Dorsolateral prefrontal cortex (tissue), 120 donors: ENCODE measurements at regions of chr22 and their contacts with region 1.

Region 1: DNA sequence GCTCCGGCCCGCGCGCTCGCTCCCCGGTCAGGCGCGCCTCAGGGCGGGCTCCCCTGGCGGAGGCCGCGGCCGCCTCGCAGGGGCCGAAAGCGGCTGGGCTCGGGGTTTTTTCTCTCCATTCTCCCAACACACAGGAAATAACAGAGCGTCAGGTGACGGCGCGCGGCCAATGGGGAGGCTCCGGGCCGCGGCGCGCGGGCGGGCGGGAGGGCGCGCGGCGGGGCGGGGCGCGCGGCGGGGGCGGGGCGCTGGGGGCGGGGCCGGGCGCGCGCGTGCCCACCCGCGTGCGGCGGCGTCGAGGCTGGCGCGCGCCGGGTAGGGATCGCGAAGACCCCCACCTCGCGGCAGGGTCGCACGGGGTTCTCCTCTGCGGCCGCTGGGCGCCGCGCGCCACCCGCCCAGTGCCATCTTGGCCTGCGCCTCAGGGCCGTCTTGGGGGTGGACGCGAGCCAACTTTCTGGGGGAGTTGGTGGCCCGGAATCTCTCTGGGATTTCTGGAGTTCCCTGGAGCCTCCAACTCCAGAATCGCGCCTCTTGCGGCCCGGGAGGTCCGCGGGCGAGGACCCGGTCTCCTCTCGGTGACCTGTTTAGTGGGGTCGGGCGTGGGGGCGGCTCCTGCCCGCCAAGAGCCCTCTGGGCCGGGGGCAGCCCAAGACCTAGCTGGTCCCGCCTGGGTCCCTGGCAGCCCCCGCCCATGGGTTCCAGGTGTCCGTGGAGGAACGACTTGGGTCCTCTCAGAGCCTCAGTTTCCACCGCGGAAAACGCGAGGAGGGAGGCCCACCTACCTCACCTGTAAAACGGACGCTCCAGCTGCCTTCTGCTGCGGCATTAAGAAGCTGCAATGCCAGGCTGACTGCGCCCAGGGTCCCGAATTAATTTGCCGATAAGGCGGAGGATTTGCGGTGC is at the start of gene TCF20:
- DNase-seq: peak in 9 of 10 donors; percentile 60 to 82 (median 72)
- H3K4me3 ChIP-seq: peak within 1 kb of the TSS; percentile 66 to 99 (median 95)
- H3K27ac ChIP-seq: peak within 1 kb of the TSS in 53 of 59 donors; percentile 29 to 92 (median 71)
- H3K27me3 ChIP-seq: no peaks in the 10 kb centered on the region
- CTCF ChIP-seq: no peak
- total RNA-seq, gene TCF20: 46.9 to 80.5 (median 64.3) TPM

Region 2: DNA sequence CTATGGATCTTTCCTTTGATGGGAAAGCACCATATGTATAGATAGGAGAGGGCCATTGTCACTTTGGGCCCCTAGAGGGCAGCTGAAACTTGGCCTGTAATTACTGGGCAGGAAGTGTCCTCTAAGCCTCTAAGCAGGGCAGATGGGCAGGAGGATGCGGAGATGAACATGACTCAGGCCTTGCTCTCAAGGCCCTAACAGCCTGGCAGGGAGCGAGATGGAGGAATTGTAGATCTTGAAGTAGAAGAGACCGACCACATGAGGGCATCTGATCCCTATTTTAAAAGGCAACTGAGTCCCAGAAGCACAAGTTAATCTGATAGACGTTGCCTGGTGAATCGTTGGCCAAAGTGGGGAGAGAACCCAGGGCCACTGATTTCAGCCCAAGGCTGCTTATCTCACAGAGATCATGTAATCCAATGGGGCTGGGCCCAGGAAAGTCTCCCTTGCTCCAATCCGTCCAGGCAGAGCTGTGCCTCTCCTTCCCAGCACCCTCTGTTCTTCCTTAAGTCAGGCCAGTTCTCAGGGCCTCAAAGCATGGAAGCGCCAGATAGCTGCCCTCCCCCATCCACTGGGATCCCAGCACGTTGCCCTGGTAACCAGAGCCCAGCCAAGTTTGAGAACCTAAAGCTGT is 304.0 kb before region 1 on chr22:
- intact Hi-C with region 1: no loop called
- DNase-seq: peak in 6 of 10 donors; percentile 46 to 60 (median 56)
- H3K4me3 ChIP-seq: no peak overlapping the region
- H3K27ac ChIP-seq: peak overlapping the region in 54 of 59 donors; percentile 2 to 85 (median 60)
- H3K27me3 ChIP-seq: no peaks in the 10 kb centered on the region
- CTCF ChIP-seq: peak in 54 of 56 donors; percentile 9 to 73 (median 50)

Region 3: DNA sequence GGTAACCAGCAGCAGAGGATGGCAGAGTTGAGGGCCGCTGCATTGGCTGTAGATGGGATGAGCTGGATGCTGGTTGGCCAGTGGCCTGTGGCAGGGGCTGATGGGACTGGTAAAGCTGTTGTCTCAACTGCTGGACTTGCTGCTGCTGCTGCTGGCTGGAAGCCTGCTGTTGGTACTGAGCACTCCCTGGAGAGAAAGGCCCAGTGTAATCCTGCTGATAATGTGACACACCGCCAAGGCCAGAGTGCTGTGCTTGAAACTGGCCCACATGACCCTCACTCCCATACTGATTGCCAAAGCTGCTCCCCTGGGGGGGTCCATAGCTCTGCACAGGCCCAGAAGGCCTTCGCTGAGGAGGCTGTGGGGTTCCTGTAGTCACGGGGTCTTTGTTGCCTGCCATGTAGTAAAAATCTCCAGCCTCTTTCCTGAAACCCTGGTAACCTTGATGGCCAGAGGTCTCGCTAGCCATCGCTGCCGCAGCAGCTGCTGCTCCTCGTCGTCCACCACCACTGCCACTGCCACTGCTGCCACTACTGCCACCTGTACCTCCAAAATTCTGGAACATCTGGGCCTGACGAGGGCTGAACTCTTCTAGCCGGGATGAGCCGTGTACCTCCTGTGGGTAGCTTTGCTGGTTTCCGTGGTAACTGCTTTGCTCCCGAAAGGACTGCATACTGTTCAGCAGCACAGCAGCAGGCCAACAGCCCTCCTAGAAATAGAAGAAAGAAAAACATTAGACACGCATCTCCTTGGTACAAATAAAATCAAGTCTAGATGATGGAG is 55.9 kb before region 1 on chr22:
- intact Hi-C with region 1: loop called (anchors 2 to 10 kb)
- DNase-seq: peak; percentile 26 to 92 (median 89)
- H3K4me3 ChIP-seq: peak overlapping the region in 11 of 59 donors; percentile 0 to 37 (median 14)
- H3K27ac ChIP-seq: peak overlapping the region; percentile 52 to 96 (median 92)
- H3K27me3 ChIP-seq: no peaks in the 10 kb centered on the region
- CTCF ChIP-seq: peak in 5 of 56 donors; percentile 12 to 38 (median 15)

Region 4: DNA sequence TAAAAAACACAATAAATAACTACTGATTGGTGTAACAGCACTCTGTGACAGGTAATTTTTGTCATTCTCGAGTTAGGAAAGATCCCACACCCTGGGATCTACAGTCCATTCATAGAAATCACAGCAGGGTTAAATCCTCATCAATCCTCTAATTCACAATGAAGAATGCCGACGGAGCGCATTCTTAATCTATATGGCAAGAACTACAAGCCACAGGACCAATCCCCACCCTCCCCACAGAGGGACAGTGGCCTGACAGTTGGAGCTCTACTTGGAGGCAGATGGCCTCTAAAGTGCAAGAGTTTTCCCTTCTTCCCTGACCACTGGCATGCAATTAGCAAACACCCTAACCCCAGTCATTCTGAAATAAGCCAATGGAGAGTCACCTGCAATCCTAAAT is 34.5 kb before region 1 on chr22:
- intact Hi-C with region 1: no loop called
- DNase-seq: no peak
- H3K4me3 ChIP-seq: no peak overlapping the region
- H3K27ac ChIP-seq: no peak overlapping the region
- H3K27me3 ChIP-seq: no peaks in the 10 kb centered on the region
- CTCF ChIP-seq: no peak

Region 5: GRCh38 chr22:42313804-42314581 is 43.2 kb after region 1 on chr22:
- intact Hi-C with region 1: no loop called
- DNase-seq: peak in 7 of 10 donors; percentile 33 to 74 (median 63)
- H3K4me3 ChIP-seq: no peak overlapping the region
- H3K27ac ChIP-seq: peak overlapping the region in 5 of 59 donors; percentile 2 to 50 (median 26)
- H3K27me3 ChIP-seq: no peaks in the 10 kb centered on the region
- CTCF ChIP-seq: peak in 47 of 56 donors; percentile 14 to 64 (median 42)

Region 6: DNA sequence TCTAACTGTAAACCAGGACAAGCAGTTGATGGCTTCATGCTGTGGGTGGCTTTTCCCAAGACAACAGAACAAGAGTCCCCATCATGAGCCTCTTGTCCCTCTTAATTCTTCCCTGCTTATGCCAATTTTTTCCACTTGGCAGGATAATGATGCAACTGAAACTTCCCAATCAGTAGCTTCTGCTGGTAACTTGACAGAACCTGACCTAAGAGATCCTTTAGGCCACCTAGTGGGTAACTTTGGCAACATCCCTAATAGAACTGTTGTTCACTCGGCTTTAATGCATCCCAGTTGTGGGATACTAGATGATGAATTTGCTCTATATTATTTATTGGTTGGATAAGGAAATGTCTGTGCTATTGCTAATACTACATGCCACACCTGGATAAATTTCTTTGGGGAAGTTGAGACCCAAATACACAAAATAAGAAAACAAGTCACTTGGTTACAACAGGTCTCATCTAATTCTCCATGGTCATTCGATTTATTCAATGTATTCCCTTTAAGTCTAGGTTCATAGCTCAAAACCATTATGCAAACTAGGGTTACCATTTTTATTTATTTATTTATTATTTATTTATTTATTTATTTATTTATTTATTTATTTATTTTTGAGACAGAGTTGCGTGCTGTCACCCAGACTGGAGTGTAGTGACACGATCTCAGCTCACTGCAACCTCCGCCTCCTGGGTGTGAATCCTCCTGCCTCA is 202.9 kb after region 1 on chr22:
- intact Hi-C with region 1: no loop called
- DNase-seq: no peak
- H3K4me3 ChIP-seq: no peak overlapping the region
- H3K27ac ChIP-seq: no peak overlapping the region
- H3K27me3 ChIP-seq: no peaks in the 10 kb centered on the region
- CTCF ChIP-seq: peak; percentile 28 to 72 (median 60)